ENCODE measurements at regions of chr5 and their contacts with region 1.

Region 1: GRCh38 chr5:115098041-115098702 is 71.5 kb downstream of the TRIM36 start:
- DNase-seq: no peak
- H3K4me3 ChIP-seq: no peak overlapping the region
- H3K27ac ChIP-seq: no peak overlapping the region
- H3K4me1 ChIP-seq: no peaks in the 10 kb centered on the region
- H3K27me3 ChIP-seq: peaks cover 22% of the 10 kb centered on the region
- CTCF ChIP-seq: peak; percentile 65

Region 2: DNA sequence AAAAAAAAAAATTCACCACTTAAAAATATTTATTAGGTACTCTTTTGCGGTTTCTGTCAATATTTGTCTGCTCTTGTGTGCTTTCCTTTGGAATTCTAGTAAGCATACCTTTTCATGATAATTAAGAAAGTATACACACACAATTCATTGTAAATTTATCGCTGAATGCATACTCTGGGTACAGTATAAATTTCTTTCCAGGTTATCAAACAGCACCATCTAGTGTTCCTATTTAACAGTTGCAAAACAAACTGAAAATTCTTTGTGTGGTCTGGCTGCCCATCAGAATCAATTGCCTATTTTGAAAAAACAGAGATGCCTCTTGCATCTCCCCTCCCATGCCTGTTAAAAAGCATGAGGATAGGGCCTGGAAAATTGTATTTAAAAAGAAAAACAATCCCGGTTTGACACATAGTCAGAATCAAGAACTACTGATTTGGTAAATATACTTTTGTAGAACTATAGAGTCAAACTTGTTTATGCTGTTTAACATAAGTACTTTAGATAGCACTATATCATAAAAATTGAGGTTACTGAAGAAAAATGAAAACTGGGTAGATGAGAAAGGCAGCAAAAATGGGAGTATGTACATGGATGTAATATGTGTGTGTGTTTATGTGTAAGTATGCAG is 148.3 kb after region 1 on chr5:
- intact Hi-C with region 1: loop called (anchors 5 kb)
- DNase-seq: no peak
- H3K4me3 ChIP-seq: no peak overlapping the region
- H3K27ac ChIP-seq: no peak overlapping the region
- H3K4me1 ChIP-seq: peaks cover 25% of the 10 kb centered on the region
- H3K27me3 ChIP-seq: no peaks in the 10 kb centered on the region
- CTCF ChIP-seq: peak; percentile 75